Activated T-helper 2 cell treated with anti-CD3 and anti-CD28 coated beads, Interferon-gamma antibody, Interleukin-2, Interleukin-4, amounts not matched to agents 10 μg/mL and 5 μg/mL and 100 μg/mL, durations not matched to agents 14 hours and 24 hours and 36 hours (primary cell): ENCODE measurements at regions of chr4 and their contacts with region 1.

Region 1: DNA sequence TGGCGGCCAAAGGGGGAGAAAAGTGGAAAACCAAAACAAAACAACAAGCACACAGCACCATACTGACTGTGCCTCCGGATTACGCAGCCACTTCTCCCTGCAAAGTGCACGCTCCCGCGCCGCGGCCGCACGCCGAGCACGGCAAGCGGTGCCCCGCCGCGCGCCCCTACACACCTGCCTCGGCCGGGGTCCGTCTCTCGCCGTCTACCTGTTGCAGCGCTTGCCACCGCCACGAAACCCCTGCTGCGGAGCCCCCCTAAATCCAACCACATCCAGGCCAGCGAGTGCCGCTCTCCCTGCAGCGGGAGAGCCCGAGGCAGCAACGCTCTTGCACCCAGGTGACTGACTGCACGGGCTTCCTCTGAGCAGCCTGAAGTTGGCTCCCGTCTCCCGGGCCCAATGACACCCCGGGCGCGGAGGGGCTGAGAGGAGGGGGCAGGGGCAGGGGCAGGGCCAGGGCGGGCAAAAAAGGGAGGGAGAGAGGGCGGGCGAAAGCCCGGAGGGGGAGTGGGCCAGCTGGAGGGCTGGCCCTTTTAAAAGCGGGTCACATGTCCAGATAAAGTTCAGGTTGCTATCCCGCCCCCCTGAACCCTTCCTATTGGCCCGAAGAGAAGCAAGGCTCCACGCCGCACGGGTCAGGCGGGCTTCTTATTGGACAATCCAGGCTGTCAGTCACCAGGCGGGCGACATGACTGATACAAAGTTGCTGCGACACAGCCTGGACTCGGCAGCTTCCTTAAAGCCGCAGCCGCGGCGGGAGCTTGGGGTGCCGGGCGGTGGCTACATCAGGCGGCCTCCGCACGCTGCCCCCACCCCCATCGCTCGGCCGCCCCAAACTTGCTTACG is at the start of gene NR3C2:
- DNase-seq: peak; percentile 95
- H3K4me3 Mint-ChIP-seq: peak within 1 kb of the TSS; percentile 93
- H3K27ac Mint-ChIP-seq: peak within 1 kb of the TSS; percentile 46
- H3K4me1 Mint-ChIP-seq: peaks cover 19% of the 10 kb centered on the region
- H3K27me3 Mint-ChIP-seq: peaks cover 51% of the 10 kb centered on the region
- total RNA-seq, gene NR3C2: 0.21 and 0.32 TPM in 2 replicates

Region 2: DNA sequence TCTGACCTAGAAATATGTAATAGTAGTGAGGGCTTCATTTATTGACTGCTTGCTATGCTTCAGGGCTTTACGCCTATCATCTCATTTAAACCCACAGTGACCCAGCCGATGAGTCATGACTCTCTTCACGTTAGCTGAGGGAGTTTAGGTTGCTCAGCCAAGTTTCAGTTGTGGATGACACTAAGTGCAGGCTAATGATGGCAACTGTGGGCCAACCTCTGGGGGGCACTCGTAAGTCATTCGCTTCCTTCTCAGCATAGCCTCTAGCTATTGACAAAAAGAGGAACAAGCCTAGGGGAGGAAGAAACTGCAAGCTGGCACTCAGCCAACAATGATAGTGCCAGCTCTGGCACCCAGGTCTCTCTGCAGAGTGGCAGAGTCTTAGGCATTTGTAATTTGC is 385.3 kb before region 1 on chr4:
- intact Hi-C with region 1: loop called (anchors 5 kb)
- DNase-seq: peak; percentile 41
- H3K4me3 Mint-ChIP-seq: no peak overlapping the region
- H3K27ac Mint-ChIP-seq: no peak overlapping the region
- H3K4me1 Mint-ChIP-seq: peaks cover 64% of the 10 kb centered on the region
- H3K27me3 Mint-ChIP-seq: no peaks in the 10 kb centered on the region

Region 3: DNA sequence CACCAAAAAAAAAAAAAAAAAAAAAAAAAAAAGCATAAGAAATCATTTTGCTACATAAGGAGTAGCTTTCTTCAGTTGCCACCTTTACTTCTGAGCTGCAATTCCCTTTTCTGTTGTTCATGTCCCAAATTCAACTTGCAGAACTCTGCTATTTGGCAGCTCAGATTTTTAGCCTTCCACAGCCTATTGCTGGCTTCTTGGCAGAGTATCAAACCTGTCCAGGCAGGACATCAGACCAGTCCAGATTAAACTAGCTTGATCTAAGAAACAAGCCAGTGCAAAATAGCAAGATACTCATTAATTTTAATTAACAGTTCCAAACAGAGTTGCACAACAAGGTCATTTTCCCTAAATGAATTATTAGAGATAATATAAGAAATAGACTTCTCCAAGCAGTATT is 123.6 kb after region 1 on chr4:
- intact Hi-C with region 1: no loop called
- DNase-seq: no peak
- H3K4me3 Mint-ChIP-seq: no peak overlapping the region
- H3K27ac Mint-ChIP-seq: no peak overlapping the region
- H3K4me1 Mint-ChIP-seq: no peaks in the 10 kb centered on the region
- H3K27me3 Mint-ChIP-seq: no peaks in the 10 kb centered on the region